KBM-7 (cell line): ENCODE measurements at regions of chrX and their contacts with region 1.

Region 1: DNA sequence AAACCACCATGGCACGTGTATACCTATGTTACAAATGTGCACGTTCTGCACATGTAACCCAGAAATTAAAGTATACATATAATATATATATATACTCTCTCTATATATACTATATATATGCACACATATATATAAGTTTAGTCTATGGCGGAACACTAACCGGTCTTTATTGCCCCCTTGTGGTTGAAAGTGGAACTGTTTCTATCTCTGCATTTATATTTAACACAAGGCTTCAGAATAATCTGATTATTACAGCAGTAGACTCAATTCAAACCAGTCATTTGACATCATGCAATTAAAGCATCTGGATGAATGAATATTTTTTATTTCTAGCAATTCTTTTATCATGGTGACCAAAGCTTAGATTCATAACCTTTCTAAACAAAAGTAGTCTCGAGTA is 14.6 kb downstream of the RAB9B start:
- DNase-seq: peak; percentile 71

Region 2: DNA sequence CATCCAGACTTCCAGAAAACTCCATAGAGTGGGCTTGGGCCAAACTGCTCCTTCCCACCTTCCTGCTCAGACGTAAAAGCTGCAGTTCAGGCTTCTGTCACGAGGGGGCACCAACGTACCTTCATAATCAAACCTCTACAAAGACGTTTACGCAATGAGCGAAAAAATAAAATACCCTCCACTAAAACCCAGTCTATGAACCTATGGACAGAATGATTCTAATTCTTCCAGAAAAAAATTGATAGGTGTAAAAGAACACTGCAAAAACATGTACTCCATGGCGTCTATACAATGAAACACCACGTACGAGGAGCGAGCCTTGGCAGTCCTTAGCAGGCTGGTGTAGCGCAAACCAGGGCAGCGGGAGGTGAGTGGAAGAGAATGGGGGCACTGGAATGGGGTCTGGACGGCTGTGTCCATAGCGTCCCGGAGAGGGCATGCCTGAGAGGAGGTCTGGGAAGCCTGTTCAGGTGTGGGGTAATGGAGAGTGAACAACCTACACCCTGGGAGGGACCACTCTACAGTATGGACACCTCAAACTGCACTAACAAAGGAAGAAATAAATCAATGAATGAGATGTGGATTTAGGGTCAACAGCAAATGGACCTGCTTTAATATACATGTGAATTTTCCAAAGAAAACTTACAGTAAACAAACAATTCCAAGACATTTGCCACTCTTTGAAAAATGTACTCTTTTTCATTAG is 283.8 kb before region 1 on chrX:
- in situ Hi-C with region 1: loop called (anchors 25 kb)
- DNase-seq: peak; percentile 86